Adrenal gland (tissue), 19 donors: ENCODE measurements at regions of chr19 and their contacts with region 1.

Region 1: GRCh38 chr19:18117692-18118378 is 20.3 kb downstream of the MAST3 start:
- DNase-seq: peak; percentile 86 to 94 (median 91)
- H3K4me3 ChIP-seq: peak overlapping the region; percentile 46 to 77 (median 52)
- H3K27ac ChIP-seq: peak overlapping the region in 4 of 5 donors; percentile 30 to 64 (median 48)
- H3K4me1 ChIP-seq: peaks cover 6 to 19% of the 10 kb centered on the region in 2 donors
- H3K27me3 ChIP-seq: no peaks in the 10 kb centered on the region
- CTCF ChIP-seq: no peak
- POLR2A ChIP-seq: no peak

Region 2: DNA sequence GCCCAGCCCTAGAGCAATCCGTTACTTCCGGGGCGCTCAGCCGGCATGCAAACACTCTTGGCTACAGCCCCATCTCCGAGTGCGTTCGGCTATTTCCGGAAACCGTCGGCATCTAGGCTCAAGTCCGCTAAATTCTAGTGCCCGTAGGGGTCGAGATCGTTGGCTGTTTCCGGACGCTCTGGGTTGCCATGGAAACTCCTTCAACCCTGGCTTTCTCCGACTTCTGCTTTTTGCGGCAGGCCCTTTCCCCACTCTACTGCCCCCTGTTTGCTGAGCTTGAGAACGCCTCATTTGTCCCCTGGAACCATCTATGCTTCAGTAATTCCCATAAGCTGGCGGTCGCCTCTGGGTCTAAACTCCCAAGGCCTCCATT is 34.6 kb after region 1 on chr19:
- intact Hi-C with region 1: loop called in 1 of 2 experiments (anchors 5 kb)
- DNase-seq: peak; percentile 95 to 99 (median 98)
- H3K4me3 ChIP-seq: peak overlapping the region in 3 of 4 donors; percentile 36 to 84 (median 51)
- H3K27ac ChIP-seq: peak overlapping the region; percentile 84 to 97 (median 95)
- H3K4me1 ChIP-seq: peaks cover 25 to 48% of the 10 kb centered on the region in 2 donors
- H3K27me3 ChIP-seq: no peaks in the 10 kb centered on the region
- CTCF ChIP-seq: peak; percentile 20 to 79 (median 60)
- POLR2A ChIP-seq: no peak

Region 3: GRCh38 chr19:18160971-18161635 is 43.3 kb after region 1 on chr19:
- intact Hi-C with region 1: loop called (anchors 5 kb)
- DNase-seq: peak; percentile 64 to 84 (median 71)
- H3K4me3 ChIP-seq: peak overlapping the region in 1 of 4 donors; percentile 38
- H3K27ac ChIP-seq: peak overlapping the region in 4 of 5 donors; percentile 21 to 88 (median 86)
- H3K4me1 ChIP-seq: peaks cover 36 to 41% of the 10 kb centered on the region in 2 donors
- H3K27me3 ChIP-seq: no peaks in the 10 kb centered on the region
- CTCF ChIP-seq: peak in 3 of 6 experiments; percentile 61 to 89 (median 83)
- POLR2A ChIP-seq: no peak

Region 4: DNA sequence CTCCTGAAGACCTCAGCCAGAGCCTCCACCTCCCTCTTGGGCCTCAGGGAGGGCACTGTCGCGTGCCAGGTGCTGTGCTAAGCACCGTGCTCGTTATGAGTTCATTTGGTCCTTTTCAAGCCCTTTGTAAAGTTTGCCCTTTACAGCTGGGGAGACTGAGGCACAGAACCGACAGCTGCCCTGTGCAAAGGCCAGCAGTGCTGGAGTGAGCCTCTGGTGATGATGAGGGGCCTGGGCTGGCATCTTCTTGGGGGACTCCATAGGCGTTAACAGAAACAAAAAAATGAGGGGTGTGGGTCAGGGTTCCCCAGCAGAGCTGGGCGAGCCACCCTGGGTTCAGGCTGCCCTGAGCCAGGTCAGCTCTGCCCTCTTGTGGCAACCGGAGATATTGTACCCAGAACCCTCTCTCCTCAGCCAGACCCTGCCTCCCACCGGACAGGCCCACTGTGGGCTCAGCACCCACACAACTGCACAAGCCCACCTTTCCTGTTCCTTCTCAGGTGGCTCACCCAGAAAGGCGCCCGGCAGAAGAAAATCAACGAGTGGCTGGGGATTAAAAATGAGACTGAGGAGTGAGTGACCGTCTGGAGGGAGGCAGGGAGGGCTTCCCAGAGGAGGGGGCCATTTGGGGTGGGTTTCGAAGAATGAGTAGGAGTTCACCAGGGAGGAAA is 50.3 kb after region 1 on chr19:
- intact Hi-C with region 1: loop called (anchors 5 kb)
- DNase-seq: peak in 5 of 7 donors; percentile 45 to 65 (median 52)
- H3K4me3 ChIP-seq: no peak overlapping the region
- H3K27ac ChIP-seq: no peak overlapping the region
- H3K4me1 ChIP-seq: peaks cover 18% of the 10 kb centered on the region in 2 donors
- H3K27me3 ChIP-seq: no peaks in the 10 kb centered on the region
- CTCF ChIP-seq: peak; percentile 60 to 78 (median 74)
- POLR2A ChIP-seq: no peak

Region 5: GRCh38 chr19:18214779-18215433 is 97.1 kb after region 1 on chr19:
- intact Hi-C with region 1: no loop called
- DNase-seq: no peak
- H3K4me3 ChIP-seq: no peak overlapping the region
- H3K27ac ChIP-seq: no peak overlapping the region
- H3K4me1 ChIP-seq: no peaks in the 10 kb centered on the region
- H3K27me3 ChIP-seq: no peaks in the 10 kb centered on the region
- CTCF ChIP-seq: no peak
- POLR2A ChIP-seq: no peak

Region 6: DNA sequence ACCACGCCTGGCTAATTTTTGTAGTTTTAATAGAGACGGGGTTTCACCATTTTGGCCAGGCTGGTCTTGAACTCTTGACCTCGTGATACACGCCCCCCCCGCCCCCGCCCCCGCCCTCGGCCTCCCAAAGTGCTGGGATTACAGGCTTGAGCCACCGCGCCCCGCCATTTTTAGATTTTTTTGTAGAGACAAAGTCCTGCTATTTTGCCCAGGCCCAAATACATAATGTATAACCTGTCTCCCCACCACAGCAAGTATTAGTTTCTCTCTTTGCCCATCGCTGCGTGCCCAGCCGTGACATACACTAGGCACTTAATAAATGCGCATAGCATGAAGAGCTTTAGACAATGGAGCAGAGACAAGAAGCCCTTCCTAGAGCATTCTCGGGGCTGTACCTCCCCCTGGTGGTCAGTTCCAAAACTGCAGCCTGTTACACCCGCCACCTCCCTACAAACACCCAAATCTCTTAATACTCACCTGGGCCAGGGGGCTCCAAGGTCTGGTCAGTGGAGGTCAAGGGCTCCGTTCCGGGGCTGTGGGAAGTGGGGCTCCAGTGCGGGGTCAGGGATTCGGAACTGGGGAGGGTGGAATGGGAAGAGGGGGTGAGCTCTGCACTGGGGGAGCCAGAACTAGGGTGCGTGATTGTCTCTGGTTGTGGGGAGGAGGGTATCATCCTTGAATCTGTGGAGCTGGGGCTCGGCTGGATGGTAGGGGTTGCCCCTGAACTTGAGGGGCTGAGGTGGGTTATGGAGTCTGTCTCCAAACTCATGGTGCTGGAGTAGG is 133.9 kb after region 1 on chr19:
- intact Hi-C with region 1: loop called (anchors 5 kb)
- DNase-seq: peak; percentile 55 to 89 (median 74)
- H3K4me3 ChIP-seq: no peak overlapping the region
- H3K27ac ChIP-seq: no peak overlapping the region
- H3K4me1 ChIP-seq: no peaks in the 10 kb centered on the region
- H3K27me3 ChIP-seq: no peaks in the 10 kb centered on the region
- CTCF ChIP-seq: peak; percentile 93 to 98 (median 95)
- POLR2A ChIP-seq: no peak